ENCODE measurements at regions of chr6 and their contacts with region 1.

Region 1: DNA sequence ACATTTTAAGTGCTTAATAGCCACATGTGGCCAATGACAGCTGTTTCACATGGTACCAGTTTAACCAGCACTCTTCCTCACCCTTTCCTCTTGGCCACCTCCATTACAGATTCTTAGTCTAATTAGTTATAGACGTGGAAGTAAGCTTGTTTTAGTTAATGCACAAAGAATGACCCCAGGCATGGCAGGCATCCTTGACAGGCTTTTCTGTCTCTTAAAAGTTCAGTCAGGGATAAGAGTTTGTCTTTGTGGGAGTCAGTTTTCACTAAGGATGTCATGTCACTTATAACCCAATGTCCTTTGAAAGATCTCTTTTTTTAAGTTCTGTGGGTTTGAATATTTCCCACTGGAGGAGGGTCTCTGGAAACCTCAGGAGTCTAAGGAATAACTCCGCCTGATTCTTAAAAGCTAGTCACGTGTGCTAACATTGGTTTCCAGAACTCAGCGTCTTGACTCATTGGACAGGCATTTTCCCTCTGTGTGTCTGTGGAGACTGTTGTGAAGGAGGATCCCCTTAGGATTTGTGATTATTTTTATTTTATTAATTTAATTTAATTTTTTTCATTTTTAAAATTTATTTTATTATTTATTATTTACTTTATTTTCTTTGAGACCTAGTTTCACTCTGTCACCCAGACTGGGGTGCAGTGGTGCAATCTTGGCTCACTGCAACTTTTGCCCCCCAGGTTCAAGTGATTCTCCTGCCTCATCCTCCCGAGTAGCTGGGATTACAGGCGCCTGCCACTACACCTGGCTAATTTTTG is 171.4 kb downstream of the ZFAND3 start:
- DNase-seq: no peak
- H3K4me3 Mint-ChIP-seq: no peak overlapping the region
- H3K27ac Mint-ChIP-seq: no peak overlapping the region
- H3K4me1 Mint-ChIP-seq: peaks cover 26% of the 10 kb centered on the region
- H3K27me3 Mint-ChIP-seq: no peaks in the 10 kb centered on the region

Region 2: DNA sequence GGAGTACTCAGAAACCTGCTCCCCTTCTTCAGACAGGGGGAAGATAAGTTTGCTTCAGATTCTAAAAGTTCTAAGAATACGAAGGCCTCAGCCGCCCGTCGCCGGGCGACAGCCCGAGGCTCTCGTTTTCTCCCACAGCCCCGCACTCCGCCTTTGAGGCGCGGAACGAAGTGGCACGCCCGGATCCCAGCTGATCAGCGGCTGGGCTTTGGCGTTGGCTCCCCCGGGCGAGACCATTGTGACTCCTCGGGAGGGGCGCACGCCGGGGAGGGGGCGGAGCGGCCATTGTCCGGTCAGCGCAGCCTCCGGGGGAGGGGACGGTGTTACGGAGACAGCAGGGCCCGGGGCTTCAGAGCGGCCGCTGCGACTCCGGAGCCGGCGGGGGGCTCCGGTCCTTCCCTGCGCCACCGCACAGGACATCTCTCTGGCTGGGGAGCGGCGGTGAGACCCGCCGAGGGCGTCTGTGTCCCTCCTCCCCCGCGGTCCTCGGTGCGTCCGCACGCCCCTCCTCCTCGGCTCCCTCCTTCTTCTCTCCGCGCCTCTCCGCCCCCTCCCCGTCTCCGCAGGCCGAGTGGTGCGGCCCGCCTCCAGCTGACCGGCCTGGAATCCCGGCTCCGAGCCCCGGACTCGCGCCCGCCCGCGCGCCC is 171.6 kb before region 1 on chr6 and contains the start of gene ZFAND3:
- intact Hi-C with region 1: loop called (anchors 5 kb)
- DNase-seq: peak; percentile 93
- H3K4me3 Mint-ChIP-seq: peak within 1 kb of the TSS; percentile 98
- H3K27ac Mint-ChIP-seq: peak within 1 kb of the TSS; percentile 95
- H3K4me1 Mint-ChIP-seq: peaks cover 42% of the 10 kb centered on the region
- H3K27me3 Mint-ChIP-seq: peaks cover 4% of the 10 kb centered on the region
- total RNA-seq, gene ZFAND3: 30.8 and 34.3 TPM in 2 replicates

Region 3: GRCh38 chr6:37867756-37868446 is 123.0 kb before region 1 on chr6:
- intact Hi-C with region 1: loop called (anchors 2 kb)
- DNase-seq: no peak
- H3K4me3 Mint-ChIP-seq: no peak overlapping the region
- H3K27ac Mint-ChIP-seq: peak overlapping the region; percentile 74
- H3K4me1 Mint-ChIP-seq: peaks cover 45% of the 10 kb centered on the region
- H3K27me3 Mint-ChIP-seq: no peaks in the 10 kb centered on the region

Region 4: GRCh38 chr6:37897321-37897720 is 93.6 kb before region 1 on chr6:
- intact Hi-C with region 1: no loop called
- DNase-seq: no peak
- H3K4me3 Mint-ChIP-seq: no peak overlapping the region
- H3K27ac Mint-ChIP-seq: no peak overlapping the region
- H3K4me1 Mint-ChIP-seq: peaks cover 26% of the 10 kb centered on the region
- H3K27me3 Mint-ChIP-seq: no peaks in the 10 kb centered on the region

Region 5: DNA sequence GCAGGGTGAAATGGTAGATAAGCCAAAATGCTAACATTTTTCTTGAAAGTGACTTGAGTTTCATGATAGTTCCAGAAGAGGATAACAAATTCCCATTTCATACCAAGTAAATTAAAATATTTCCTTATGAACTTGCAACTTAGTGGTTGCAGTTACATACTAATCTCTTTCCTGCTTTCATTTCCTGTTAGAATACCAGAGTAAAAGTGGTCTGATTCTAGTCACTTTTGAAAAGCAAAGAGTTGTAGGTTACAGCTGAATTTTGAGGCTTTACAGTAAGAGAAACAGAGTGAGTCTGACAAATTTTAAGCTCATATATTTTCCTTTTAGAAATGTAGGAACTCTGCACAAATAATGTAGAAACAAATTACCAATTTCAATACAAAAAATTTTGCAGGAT is 54.0 kb before region 1 on chr6:
- intact Hi-C with region 1: loop called (anchors 10 kb)
- DNase-seq: no peak
- H3K4me3 Mint-ChIP-seq: no peak overlapping the region
- H3K27ac Mint-ChIP-seq: no peak overlapping the region
- H3K4me1 Mint-ChIP-seq: peaks cover 28% of the 10 kb centered on the region
- H3K27me3 Mint-ChIP-seq: no peaks in the 10 kb centered on the region

Region 6: GRCh38 chr6:37952027-37952426 is 38.9 kb before region 1 on chr6:
- intact Hi-C with region 1: loop called (anchors 5 kb)
- DNase-seq: no peak
- H3K4me3 Mint-ChIP-seq: no peak overlapping the region
- H3K27ac Mint-ChIP-seq: no peak overlapping the region
- H3K4me1 Mint-ChIP-seq: peaks cover 25% of the 10 kb centered on the region
- H3K27me3 Mint-ChIP-seq: no peaks in the 10 kb centered on the region

Region 7: DNA sequence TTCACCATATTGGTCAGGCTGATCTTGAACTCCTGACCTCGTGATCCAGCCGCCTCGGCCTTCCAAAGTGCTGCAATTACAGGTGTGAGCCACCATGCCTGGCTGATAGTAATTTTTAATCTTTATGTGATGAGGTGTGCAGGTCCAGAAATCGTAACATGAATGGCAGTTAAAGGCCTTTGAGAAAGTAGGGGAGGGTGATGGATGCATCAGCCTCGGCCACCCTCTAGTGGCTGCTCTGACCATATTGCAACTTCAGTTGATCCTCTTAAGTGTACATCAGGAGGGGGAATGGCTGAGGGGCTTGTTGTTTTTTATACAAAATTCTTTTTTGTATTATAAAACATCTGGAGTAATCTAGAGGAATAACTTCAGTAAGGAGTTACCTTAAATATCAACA is 21.6 kb after region 1 on chr6:
- intact Hi-C with region 1: no loop called
- DNase-seq: no peak
- H3K4me3 Mint-ChIP-seq: no peak overlapping the region
- H3K27ac Mint-ChIP-seq: no peak overlapping the region
- H3K4me1 Mint-ChIP-seq: peaks cover 3% of the 10 kb centered on the region
- H3K27me3 Mint-ChIP-seq: no peaks in the 10 kb centered on the region